ENCODE measurements at regions of chr11 and their contacts with region 1.

Region 1: GRCh38 chr11:41954034-41954433 is 494.6 kb upstream of the LRRC4C start:
- DNase-seq: no peak
- ATAC-seq: no peak
- H3K4me3 ChIP-seq: no peak overlapping the region
- H3K27ac ChIP-seq: no peak overlapping the region
- H3K4me1 ChIP-seq: no peaks in the 10 kb centered on the region
- H3K27me3 ChIP-seq: no peaks in the 10 kb centered on the region
- CTCF ChIP-seq: no peak

Region 2: DNA sequence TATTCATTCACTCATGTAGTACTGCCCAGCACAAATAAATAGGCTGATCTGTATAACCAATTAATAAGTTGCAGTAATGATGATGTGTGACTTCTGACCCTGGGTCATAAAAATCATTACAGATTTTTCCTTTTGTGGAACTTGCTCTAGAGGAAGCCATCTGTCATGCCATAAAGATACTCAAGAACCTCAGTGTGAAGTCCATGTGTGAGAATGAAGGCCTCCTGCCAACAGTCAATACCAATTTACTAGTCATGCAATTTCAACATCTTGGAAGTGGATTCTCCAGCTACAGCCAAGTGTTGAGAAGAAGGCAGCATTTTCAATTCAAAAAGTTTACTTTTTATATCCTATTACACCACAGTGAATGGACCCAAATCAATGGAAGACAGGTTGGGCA is 59.0 kb before region 1 on chr11:
- intact Hi-C with region 1: loop called in 1 of 2 experiments (anchors 10 kb)
- DNase-seq: no peak
- ATAC-seq: no peak
- H3K4me3 ChIP-seq: no peak overlapping the region
- H3K27ac ChIP-seq: no peak overlapping the region
- H3K4me1 ChIP-seq: no peaks in the 10 kb centered on the region
- H3K27me3 ChIP-seq: no peaks in the 10 kb centered on the region
- CTCF ChIP-seq: no peak

Region 3: DNA sequence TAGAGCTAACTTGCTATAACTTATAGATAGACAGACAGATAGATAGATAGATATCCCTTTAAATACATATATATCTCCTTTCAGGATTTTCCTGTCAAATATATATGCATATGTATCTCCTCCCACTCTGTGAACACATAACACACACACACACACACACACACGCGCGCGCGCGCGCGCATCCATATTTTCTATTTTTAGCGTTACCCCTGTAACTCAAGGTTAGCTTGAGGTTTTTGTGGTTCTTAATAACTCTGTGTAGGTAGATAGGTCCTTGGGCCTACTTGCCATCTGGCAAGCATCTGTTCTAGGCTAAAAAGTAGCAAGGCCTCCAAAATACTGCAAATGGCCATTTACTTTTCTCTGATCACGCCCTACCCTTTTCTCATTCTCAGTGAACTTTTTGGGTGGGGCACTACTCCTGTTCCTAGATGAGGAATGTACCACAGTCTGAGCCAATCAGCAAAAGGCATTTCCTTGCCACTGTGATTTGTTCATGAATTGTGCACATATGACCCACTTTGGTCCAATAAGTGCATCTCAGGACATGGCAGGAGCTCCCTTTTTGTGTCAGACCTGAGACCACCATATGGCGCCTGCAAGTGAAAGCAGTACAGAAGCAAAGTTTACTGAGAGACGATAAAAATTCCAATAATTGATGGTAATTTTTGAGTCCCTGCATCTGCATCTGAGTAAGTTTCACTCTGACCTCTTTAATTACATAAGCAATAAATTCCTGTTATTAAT is 617.3 kb after region 1 on chr11:
- intact Hi-C with region 1: no loop called
- DNase-seq: no peak
- ATAC-seq: no peak
- H3K4me3 ChIP-seq: no peak overlapping the region
- H3K27ac ChIP-seq: no peak overlapping the region
- H3K4me1 ChIP-seq: no peaks in the 10 kb centered on the region
- H3K27me3 ChIP-seq: no peaks in the 10 kb centered on the region
- CTCF ChIP-seq: no peak

Measured in left lung (tissue), 14 donors.